Transverse colon (tissue), 4 donors: ENCODE measurements at regions of chr1 and their contacts with region 1.

Region 1: DNA sequence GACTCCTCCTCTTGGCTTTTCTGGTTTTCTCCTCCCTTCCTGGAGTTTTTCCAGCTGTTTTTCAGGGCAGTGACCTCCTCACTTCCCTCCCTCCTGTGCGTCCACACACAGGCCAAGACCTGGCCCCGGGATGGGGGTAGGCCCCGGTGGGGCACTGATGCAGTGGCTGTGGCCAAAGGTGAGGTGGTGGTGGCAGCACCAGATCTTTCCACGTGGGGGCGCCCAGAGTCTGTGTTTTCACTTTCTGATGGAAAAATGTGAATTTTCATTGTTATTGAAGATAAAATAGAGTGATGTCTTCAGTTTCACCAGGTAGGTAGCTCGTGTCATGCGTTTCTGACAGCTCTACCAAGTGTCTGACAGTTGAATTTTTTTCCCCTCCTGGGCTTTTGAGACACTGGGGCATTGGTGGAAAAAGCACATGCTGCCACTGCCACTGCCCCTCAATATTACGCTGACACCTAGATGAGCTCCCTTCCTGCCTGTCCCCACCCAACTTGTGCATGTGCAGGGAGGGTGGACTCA is 39.9 kb upstream of the MAGOH start:
- DNase-seq: peak; percentile 66
- H3K4me3 ChIP-seq: no peak overlapping the region
- H3K27ac ChIP-seq: no peak overlapping the region
- H3K4me1 ChIP-seq: no peaks in the 10 kb centered on the region
- H3K27me3 ChIP-seq: no peaks in the 10 kb centered on the region
- CTCF ChIP-seq: peak; percentile 89 to 97 (median 90)
- EP300 ChIP-seq: no peak
- POLR2A ChIP-seq: no peak

Region 2: DNA sequence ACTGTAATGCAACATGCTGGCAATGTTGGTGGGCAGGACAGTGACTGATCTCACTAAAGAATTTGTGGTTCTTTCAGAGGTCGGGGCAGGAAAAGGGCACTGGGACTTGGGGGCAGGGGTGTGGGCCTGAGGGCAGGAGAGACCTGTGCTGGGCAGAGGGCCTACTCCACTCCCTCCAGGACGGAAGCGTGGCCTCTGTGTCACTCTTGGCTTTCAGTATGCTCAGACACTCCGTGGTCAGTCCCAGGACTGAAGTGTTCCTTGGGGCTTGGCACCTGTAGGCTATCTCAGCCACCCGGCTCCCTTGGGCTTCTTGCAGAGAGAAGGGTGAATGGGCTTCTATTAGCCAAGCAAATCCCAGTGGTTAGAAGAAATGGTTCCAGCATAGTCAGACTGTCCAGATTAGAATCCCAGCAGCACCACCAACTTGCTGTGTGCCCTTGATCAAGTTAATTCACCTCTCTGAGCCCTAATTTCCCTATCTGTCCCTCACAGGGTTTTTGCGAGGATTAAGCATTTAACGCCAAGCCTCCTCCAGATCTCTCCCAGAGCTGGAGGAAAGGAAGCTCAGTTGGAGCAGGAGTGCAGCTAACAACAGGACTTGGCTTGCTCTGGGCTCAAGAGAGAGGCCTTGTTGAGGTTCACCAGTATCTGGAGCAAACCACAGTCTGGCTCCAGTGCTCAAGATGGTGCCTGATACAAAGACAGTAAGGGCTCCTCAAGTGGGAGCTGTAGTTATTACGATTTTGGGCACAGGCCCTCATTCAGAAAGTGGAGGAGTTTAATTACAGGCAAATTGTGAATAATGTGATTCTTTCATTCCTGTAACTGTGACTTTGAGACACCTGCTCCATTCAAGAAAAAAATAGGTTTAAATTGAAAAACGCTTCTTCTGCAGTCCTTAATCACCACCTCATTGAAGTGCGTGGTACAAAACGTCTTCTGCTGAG is 107.3 kb after region 1 on chr1:
- in situ Hi-C with region 1: loop called (anchors 5 to 10 kb)
- intact Hi-C with region 1: no loop called
- DNase-seq: no peak
- H3K4me3 ChIP-seq: no peak overlapping the region
- H3K27ac ChIP-seq: no peak overlapping the region
- H3K4me1 ChIP-seq: no peaks in the 10 kb centered on the region
- H3K27me3 ChIP-seq: no peaks in the 10 kb centered on the region
- CTCF ChIP-seq: no peak
- EP300 ChIP-seq: no peak
- POLR2A ChIP-seq: no peak

Region 3: GRCh38 chr1:53754484-53755312 is 476.4 kb after region 1 on chr1:
- in situ Hi-C with region 1: loop called in 1 of 4 experiments (anchors 25 kb)
- intact Hi-C with region 1: no loop called
- DNase-seq: peak; percentile 32
- H3K4me3 ChIP-seq: no peak overlapping the region
- H3K27ac ChIP-seq: no peak overlapping the region
- H3K4me1 ChIP-seq: no peaks in the 10 kb centered on the region
- H3K27me3 ChIP-seq: no peaks in the 10 kb centered on the region
- CTCF ChIP-seq: peak; percentile 56 to 66 (median 61)
- EP300 ChIP-seq: no peak
- POLR2A ChIP-seq: no peak